Activated CD4-positive, alpha-beta T cell treated with anti-CD3 and anti-CD28 coated beads for 36 hours (primary cell): ENCODE measurements at regions of chr21 and their contacts with region 1.

Region 1: DNA sequence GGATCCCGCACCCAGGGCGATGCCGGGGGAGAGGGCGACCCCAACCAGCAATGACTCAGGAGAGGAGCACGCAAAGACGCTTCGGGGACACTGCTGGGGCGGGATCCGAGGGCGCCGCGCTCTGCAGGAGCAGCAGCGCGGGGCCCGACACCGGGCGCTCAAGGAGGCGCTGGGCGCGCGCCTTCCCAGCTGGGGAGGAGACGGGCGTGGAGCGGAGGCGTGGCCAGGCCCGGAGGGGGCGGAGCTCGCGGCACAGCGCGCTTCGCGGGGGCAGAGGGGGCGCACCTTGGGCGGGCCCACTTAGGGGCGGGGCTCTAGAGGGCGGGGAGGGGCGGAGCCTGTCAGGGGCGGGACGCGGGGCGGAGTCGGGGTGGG is 369 bp downstream of the SUMO3 start:
- DNase-seq: peak; percentile 97
- ATAC-seq: peak; percentile 92
- H3K4me3 Mint-ChIP-seq: peak overlapping the region; percentile 69
- H3K27ac Mint-ChIP-seq: no peak overlapping the region
- H3K4me1 Mint-ChIP-seq: peaks cover 13% of the 10 kb centered on the region
- H3K27me3 Mint-ChIP-seq: no peaks in the 10 kb centered on the region

Region 2: GRCh38 chr21:44338971-44339910 is 478.3 kb before region 1 on chr21 and contains the start of gene CFAP410:
- CTCF ChIA-PET with region 1: no interaction called
- POLR2A ChIA-PET with region 1: no interaction called
- intact Hi-C with region 1: loop called in 1 of 2 experiments (anchors 1 kb)
- DNase-seq: peak; percentile 97
- ATAC-seq: peak; percentile 97
- H3K4me3 Mint-ChIP-seq: peak within 1 kb of the TSS; percentile 96
- H3K27ac Mint-ChIP-seq: peak within 1 kb of the TSS; percentile 98
- H3K4me1 Mint-ChIP-seq: peaks cover 18% of the 10 kb centered on the region
- H3K27me3 Mint-ChIP-seq: no peaks in the 10 kb centered on the region
- total RNA-seq, gene CFAP410: 7.3 to 11.4 TPM

Region 3: DNA sequence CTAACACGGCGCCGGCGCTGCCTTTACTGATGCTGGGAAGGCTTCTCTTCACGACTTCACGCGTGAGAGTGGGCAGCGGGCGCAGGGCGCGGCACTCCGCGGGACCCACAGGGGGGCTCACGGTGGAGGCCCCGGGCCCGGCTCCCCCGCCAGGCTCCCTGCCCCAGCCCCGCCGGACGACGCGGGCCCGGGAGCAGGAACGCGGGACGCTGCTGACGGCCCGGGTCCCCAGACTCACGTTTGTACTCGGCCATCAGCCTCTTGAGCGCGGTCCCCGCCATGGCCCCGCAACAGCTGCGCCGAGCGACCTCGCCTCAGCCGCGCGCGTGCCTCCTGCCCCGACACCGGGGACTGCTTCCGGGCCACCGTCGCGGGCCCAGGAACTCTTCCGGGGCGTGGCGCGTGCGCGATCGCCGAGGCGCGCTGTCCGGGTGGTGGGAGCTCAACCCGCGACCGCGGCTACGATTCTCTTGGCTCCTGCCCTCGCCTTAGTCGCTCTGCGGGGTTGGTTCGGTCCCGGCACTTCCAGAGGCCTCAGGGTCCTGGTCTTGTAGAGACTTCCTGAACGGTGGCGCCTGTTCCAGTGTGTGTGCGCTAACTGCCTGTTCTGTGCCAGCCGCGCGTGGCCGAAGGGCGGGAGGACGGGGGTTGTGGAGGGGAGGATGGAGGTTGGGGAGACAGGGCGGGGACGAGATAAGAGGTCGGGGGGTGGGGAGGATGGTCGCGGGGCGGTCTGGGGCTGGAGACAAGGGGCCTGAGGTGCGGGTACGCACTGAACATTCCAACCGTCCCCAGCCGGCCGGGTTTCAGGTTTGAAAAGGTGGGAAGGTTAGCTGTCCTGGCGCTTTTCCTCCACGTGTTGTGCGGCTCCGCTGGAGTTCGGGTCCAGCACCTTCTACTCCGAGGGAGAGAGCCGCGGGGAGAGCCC is 15.8 kb before region 1 on chr21 and contains the start of gene UBE2G2:
- CTCF ChIA-PET with region 1: interaction called, 4 read pairs
- POLR2A ChIA-PET with region 1: interaction called, 3 read pairs
- intact Hi-C with region 1: loop called in 1 of 2 experiments (anchors 1 kb)
- DNase-seq: peak; percentile 92
- ATAC-seq: peak; percentile 95
- H3K4me3 Mint-ChIP-seq: peak within 1 kb of the TSS; percentile 94
- H3K27ac Mint-ChIP-seq: peak within 1 kb of the TSS; percentile 90
- H3K4me1 Mint-ChIP-seq: peaks cover 54% of the 10 kb centered on the region
- H3K27me3 Mint-ChIP-seq: no peaks in the 10 kb centered on the region
- total RNA-seq, gene UBE2G2: 103 to 121 TPM

Region 4: GRCh38 chr21:44845399-44846223 is 28.1 kb after region 1 on chr21:
- CTCF ChIA-PET with region 1: no interaction called
- POLR2A ChIA-PET with region 1: no interaction called
- intact Hi-C with region 1: loop called in 1 of 2 experiments (anchors 1 kb)
- DNase-seq: peak; percentile 81
- ATAC-seq: peak; percentile 86
- H3K4me3 Mint-ChIP-seq: peak overlapping the region; percentile 64
- H3K27ac Mint-ChIP-seq: peak overlapping the region; percentile 51
- H3K4me1 Mint-ChIP-seq: peaks cover 7% of the 10 kb centered on the region
- H3K27me3 Mint-ChIP-seq: no peaks in the 10 kb centered on the region

Region 5: DNA sequence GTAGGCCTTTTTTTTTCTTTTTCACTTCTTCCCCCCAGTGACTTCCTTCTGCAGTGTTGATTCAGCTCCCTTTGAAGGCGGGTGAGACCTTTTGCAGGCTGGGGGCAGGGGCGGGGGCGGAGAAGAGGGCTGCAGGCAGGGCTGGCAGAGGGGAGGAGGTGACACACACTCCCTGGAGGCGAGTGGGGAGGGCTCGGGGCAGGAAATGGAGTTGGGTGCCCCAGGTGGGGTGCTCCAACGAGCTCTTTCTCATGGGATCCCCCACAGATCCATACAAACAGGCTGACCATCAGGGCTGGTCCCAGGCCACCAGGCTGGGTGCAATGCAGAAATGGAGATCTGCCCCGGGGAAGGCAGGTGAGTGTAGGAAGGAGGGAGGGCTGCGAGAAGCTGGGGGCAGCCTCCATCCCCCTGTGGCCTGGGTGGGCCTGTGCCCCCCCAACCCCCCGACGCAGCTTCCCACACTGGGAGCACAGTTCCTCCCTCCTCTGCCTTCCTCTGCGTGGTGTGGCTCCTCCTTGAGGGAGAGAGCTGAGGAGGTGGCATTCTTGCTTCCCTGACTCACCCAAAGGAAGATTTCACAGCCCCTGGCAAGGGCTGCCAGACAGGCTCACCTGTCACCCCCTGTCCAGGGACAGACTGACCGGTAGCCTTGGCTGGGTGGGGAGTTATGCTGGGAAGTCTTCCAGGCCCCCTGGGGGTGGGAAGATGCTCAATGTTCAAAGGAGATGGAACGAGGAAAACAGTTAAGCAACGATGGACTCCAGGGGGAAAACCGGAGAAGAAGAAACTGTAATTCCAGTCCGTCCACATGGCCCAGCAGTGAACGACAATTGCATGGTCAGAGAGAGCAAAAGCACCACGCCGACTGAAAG is 110.3 kb after region 1 on chr21:
- CTCF ChIA-PET with region 1: interaction called, 3 read pairs
- POLR2A ChIA-PET with region 1: no interaction called
- intact Hi-C with region 1: loop called in 1 of 2 experiments (anchors 1 kb)
- DNase-seq: peak; percentile 97
- ATAC-seq: peak; percentile 74
- H3K4me3 Mint-ChIP-seq: peak overlapping the region; percentile 90
- H3K27ac Mint-ChIP-seq: peak overlapping the region; percentile 94
- H3K4me1 Mint-ChIP-seq: peaks cover 80% of the 10 kb centered on the region
- H3K27me3 Mint-ChIP-seq: no peaks in the 10 kb centered on the region

Region 6: GRCh38 chr21:45080639-45081414 is 263.3 kb after region 1 on chr21:
- CTCF ChIA-PET with region 1: no interaction called
- POLR2A ChIA-PET with region 1: no interaction called
- intact Hi-C with region 1: loop called in 1 of 2 experiments (anchors 10 kb)
- DNase-seq: peak; percentile 64
- ATAC-seq: peak; percentile 42
- H3K4me3 Mint-ChIP-seq: peak overlapping the region; percentile 22
- H3K27ac Mint-ChIP-seq: peak overlapping the region; percentile 92
- H3K4me1 Mint-ChIP-seq: peaks cover 100% of the 10 kb centered on the region
- H3K27me3 Mint-ChIP-seq: no peaks in the 10 kb centered on the region

Region 7: DNA sequence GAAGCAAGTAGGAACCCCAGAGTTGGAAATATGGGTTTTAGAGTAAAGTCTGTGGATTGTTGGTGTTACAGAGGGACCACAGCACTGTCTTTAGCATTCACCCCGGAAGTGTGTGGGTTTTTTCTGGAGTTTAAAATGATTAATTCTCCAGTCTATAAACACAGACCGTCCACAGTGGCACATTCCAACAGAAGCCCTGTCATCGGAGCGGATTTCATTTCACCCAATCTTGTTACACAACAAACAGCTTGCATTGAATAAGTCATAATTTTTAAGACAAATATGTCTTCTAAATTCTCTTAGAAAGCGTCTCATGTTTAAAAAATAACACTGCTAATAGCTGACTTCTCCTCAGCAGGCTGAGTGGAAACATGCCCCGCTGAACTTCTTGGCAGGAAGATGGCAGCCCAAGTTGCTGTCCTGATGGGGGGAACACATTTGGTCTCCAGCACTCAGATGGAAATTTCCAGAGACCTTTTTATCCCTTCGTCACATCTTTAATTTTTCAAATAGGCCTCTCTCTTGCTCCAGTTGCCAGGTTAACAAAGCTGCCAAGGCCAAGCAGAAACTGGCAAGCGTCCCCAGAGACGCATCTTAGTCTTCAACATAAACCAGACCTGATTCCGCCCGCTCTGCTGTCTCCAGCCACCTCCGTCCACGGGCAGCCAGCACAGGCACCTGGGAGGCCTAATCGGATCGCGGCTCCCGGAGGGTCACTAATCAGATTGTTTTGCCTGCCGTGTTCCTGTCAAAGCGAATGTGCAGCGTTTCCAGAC is 753.5 kb after region 1 on chr21:
- CTCF ChIA-PET with region 1: no interaction called
- POLR2A ChIA-PET with region 1: no interaction called
- intact Hi-C with region 1: no loop called
- DNase-seq: no peak
- ATAC-seq: no peak
- H3K4me3 Mint-ChIP-seq: no peak overlapping the region
- H3K27ac Mint-ChIP-seq: peak overlapping the region; percentile 19
- H3K4me1 Mint-ChIP-seq: no peaks in the 10 kb centered on the region
- H3K27me3 Mint-ChIP-seq: no peaks in the 10 kb centered on the region